ENCODE measurements at regions of chr11 and their contacts with region 1.

Region 1: DNA sequence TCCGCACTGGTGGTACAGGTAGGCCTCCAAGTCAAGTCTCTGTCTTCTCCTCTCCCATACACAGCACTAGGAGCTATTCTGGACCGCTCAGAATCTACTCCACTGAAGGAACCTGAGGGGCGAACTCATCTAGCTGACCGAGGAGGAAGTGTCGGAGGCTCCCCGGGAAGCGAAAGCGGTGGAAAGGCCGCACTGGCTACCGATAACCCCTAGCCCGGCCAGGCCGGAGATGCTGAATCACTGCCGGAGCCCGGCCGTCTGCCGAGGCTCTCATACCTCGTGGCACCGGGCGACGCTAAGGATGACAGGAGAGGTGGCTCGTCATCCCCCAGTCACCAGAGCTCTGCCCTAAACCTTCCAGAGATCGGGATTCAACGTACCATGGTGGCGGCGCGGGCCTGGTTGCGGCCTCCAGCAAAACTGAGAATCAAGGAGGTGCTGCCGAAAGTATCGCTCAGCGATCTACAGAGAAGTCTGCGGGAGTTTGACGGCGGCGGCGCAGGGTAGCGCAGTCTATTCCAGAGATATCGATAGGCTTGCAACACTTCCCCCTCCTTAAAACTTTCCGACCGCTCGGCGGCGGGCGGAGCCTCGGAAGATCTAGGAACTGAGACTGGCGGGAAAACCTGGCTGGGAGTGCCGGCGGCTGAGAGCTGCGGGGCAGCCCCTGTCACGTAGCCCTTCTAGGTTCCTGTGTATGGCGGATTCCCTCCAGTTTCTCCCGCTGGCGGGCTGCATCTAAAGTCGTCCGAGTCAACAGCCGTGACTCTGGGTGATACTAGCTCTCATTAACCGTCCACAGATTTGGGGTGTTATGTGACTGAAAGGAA is at the start of gene PSMA1:
- DNase-seq: peak; percentile 82 to 98
- H3K4me3 ChIP-seq: peak within 1 kb of the TSS; percentile 85 to 91
- H3K27ac ChIP-seq: peak within 1 kb of the TSS; percentile 86 to 89
- H3K4me1 ChIP-seq: peaks cover 6 to 17% of the 10 kb centered on the region in 2 donors
- H3K27me3 ChIP-seq: no peaks in the 10 kb centered on the region
- CTCF ChIP-seq: peak; percentile 22 to 62 (median 45)
- total RNA-seq, gene PSMA1: 42.5 TPM

Region 2: DNA sequence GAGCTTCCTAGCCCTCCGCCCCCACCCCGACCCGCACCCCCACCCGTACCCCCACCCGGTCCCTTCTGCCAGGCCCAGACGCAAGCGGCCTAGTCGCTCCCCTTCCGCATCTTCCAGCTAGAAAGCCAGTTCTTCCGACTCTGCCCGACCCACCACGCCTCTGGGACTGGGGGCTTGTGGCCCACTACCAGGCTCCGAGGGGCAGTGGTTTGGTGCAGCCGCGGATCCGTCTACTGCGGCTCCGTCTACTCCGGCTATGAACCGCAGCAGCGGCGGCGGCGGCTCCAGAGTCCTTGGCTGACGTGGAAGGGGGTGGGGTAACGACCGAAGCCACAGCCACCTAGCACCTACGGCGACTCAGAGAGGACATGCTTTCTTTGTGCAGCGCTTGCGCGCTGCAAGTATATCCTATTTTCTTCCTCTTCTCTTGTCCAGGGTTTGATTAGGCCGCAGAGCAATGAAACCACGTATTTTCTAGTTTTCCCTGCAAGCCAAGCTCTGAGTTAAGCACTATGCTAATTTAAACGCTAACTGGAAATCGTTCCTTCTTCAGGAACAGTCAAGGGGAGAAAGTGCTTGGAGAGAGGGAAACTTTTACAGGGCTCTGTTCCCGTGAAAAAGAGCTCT is 20.5 kb before region 1 on chr11 and contains the start of gene COPB1:
- intact Hi-C with region 1: loop called (anchors 1 kb)
- DNase-seq: peak; percentile 79 to 95
- H3K4me3 ChIP-seq: peak within 1 kb of the TSS; percentile 68 to 86
- H3K27ac ChIP-seq: peak within 1 kb of the TSS; percentile 82 to 90
- H3K4me1 ChIP-seq: peaks cover 0 to 18% of the 10 kb centered on the region in 2 donors
- H3K27me3 ChIP-seq: no peaks in the 10 kb centered on the region
- CTCF ChIP-seq: no peak
- total RNA-seq, gene COPB1: 29.8 TPM

Region 3: GRCh38 chr11:14537134-14537599 is 17.0 kb after region 1 on chr11:
- intact Hi-C with region 1: loop called (anchors 1 kb)
- DNase-seq: no peak
- H3K4me3 ChIP-seq: no peak overlapping the region
- H3K27ac ChIP-seq: peak overlapping the region; percentile 85 to 90
- H3K4me1 ChIP-seq: peaks cover 3 to 30% of the 10 kb centered on the region in 2 donors
- H3K27me3 ChIP-seq: no peaks in the 10 kb centered on the region
- CTCF ChIP-seq: peak; percentile 27 to 87 (median 79)

Region 4: DNA sequence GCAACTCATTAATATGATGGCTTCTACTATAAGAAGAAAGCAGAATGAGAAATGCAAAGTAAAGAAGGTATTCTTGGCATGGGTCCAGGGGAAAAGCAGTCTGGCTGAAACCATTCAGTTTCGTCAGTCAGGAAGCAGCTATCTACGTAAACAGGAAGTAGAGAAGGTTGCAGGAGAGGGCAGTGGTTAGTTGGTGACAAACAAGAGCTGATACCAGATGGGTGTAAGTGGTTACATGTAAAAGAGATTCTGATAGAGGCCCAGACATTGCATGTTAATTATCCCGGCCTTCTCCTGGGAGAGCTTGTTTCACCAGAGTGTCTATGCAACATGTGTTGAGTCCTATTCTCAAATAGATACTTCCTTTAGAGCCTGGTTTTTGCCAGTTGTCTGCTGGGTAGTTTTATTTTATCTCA is 58.4 kb after region 1 on chr11:
- intact Hi-C with region 1: no loop called
- DNase-seq: no peak
- H3K4me3 ChIP-seq: no peak overlapping the region
- H3K27ac ChIP-seq: no peak overlapping the region
- H3K4me1 ChIP-seq: no peaks in the 10 kb centered on the region
- H3K27me3 ChIP-seq: no peaks in the 10 kb centered on the region
- CTCF ChIP-seq: no peak

Measured in ascending aorta (tissue), 2 donors.